Activated CD8-positive, alpha-beta T cell treated with anti-CD3 and anti-CD28 coated beads, Interleukin-2, amount 10 ng/mL, durations not matched to agents 7 days and 5 days (primary cell): ENCODE measurements at regions of chr17 and their contacts with region 1.

Region 1: DNA sequence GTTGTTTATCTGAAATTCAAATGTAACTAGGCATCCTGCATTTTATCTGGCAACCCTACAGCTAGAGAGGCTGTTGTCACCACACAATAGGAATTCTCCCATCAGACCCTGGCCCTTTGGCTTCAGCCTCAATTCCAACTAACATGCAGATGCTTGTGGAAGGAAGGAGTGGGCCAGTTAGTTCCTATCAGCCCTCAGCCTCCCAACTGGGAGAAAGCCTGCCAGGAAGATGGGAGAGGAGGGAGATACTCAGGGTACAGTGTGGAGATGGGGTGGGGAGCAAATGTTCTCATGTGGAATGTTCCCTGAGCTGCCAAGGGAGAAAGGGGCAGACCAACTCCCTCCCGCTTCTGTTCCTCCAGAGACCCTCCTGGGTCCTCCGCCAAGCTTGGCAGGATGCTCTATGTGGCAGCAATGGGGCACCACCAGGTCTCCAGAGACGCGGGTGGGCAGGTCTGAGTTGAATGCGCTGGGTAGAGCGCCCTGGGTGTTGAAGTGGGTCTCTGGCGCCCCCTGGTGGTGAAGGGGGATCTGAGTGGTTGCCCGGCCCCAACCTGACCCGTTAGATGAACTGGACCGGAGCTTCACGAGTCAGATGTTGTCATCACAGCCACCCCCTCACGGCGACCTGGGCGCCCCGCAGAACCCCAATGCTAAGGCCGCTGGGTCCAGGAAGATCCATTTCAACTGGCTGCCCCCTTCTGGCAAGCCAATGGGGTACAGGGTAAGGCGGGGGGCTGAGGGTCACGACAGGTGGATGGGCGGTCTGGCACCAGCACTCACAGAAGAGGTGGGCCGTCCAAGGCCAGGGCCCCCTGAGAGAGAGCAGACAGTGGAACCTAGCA is 15.2 kb downstream of the GALK1 start:
- DNase-seq: peak; percentile 93
- ATAC-seq: peak; percentile 73
- H3K4me3 Mint-ChIP-seq: no peak overlapping the region
- H3K27ac Mint-ChIP-seq: no peak overlapping the region
- H3K4me1 Mint-ChIP-seq: peaks cover 18% of the 10 kb centered on the region
- H3K27me3 Mint-ChIP-seq: peaks cover 2% of the 10 kb centered on the region

Region 2: GRCh38 chr17:75557075-75557882 is 192.5 kb before region 1 on chr17:
- CTCF ChIA-PET with region 1: no interaction called
- POLR2A ChIA-PET with region 1: no interaction called
- DNase-seq: no peak
- ATAC-seq: no peak
- H3K4me3 Mint-ChIP-seq: no peak overlapping the region
- H3K27ac Mint-ChIP-seq: no peak overlapping the region
- H3K4me1 Mint-ChIP-seq: no peaks in the 10 kb centered on the region
- H3K27me3 Mint-ChIP-seq: no peaks in the 10 kb centered on the region

Region 3: GRCh38 chr17:75601057-75602051 is 148.4 kb before region 1 on chr17:
- CTCF ChIA-PET with region 1: interaction called, 56 read pairs
- POLR2A ChIA-PET with region 1: interaction called, 3 read pairs
- DNase-seq: peak; percentile 78
- ATAC-seq: peak; percentile 86
- H3K4me3 Mint-ChIP-seq: no peak overlapping the region
- H3K27ac Mint-ChIP-seq: no peak overlapping the region
- H3K4me1 Mint-ChIP-seq: peaks cover 5% of the 10 kb centered on the region
- H3K27me3 Mint-ChIP-seq: no peaks in the 10 kb centered on the region

Region 4: DNA sequence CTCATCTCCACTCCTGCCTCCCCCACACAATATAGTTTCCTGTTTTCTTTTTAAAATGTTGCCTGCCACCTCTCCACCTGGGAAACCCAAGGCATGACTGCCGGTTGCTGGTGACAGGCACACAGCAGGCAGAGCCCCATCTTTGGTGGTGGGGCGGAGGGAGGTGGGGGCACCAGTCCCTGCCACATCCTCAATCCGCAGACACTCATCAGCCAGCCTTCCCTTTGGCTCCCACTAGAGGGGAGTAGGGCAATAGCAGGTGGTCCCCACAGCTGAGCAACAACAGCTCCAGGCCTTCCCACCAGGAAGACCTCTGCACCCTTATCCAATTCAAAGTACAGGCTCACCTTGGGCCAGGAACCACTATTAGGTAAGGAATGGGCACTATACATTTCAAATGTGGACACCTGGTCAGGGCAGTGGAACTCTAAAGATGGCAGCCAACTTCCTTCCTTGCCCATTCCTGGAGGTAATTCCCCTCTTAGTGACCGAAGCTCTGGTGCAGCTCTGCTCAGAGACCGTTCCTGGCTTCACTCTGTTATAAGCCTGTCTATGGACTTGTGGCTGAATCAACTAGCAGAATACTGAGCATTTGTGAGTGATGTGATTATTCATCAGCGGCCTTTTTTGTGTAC is 96.7 kb before region 1 on chr17:
- CTCF ChIA-PET with region 1: interaction called, 48 read pairs
- POLR2A ChIA-PET with region 1: no interaction called
- DNase-seq: peak; percentile 60
- ATAC-seq: peak; percentile 79
- H3K4me3 Mint-ChIP-seq: no peak overlapping the region
- H3K27ac Mint-ChIP-seq: peak overlapping the region; percentile 72
- H3K4me1 Mint-ChIP-seq: peaks cover 15% of the 10 kb centered on the region
- H3K27me3 Mint-ChIP-seq: no peaks in the 10 kb centered on the region

Region 5: DNA sequence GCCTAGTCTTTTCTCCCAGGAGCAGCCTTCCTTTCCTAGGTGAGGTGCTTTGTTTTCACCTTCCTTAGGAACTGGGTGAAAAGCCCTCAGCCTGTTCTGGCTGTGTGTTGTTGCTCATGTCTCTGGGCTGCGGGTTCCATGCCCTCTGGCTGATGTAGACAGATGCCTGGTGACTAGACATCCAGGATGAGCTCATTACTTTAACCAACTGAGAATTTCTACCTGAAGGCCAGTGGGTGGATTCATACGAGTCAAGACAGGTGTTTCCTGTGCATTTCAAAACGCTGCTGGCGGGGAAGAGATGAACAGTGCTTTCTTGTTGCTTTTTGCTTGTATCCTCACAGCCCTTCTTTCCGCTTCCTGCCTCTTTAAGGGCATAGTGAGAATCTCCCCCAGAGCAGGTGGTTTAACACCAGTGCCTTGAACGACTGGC is 60.3 kb before region 1 on chr17:
- CTCF ChIA-PET with region 1: interaction called, 120 read pairs
- POLR2A ChIA-PET with region 1: no interaction called
- DNase-seq: peak; percentile 76
- ATAC-seq: peak; percentile 69
- H3K4me3 Mint-ChIP-seq: peak overlapping the region; percentile 37
- H3K27ac Mint-ChIP-seq: peak overlapping the region; percentile 83
- H3K4me1 Mint-ChIP-seq: peaks cover 60% of the 10 kb centered on the region
- H3K27me3 Mint-ChIP-seq: no peaks in the 10 kb centered on the region

Region 6: GRCh38 chr17:75738218-75738802 is 11.5 kb before region 1 on chr17:
- CTCF ChIA-PET with region 1: interaction called, 51 read pairs
- POLR2A ChIA-PET with region 1: interaction called, 3 read pairs
- DNase-seq: peak; percentile 72
- ATAC-seq: peak; percentile 65
- H3K4me3 Mint-ChIP-seq: peak overlapping the region; percentile 28
- H3K27ac Mint-ChIP-seq: peak overlapping the region; percentile 89
- H3K4me1 Mint-ChIP-seq: peaks cover 13% of the 10 kb centered on the region
- H3K27me3 Mint-ChIP-seq: no peaks in the 10 kb centered on the region

Region 7: GRCh38 chr17:75795820-75796607 is 46.2 kb after region 1 on chr17:
- CTCF ChIA-PET with region 1: interaction called, 14 read pairs
- POLR2A ChIA-PET with region 1: no interaction called
- DNase-seq: no peak
- ATAC-seq: no peak
- H3K4me3 Mint-ChIP-seq: no peak overlapping the region
- H3K27ac Mint-ChIP-seq: no peak overlapping the region
- H3K4me1 Mint-ChIP-seq: peaks cover 31% of the 10 kb centered on the region
- H3K27me3 Mint-ChIP-seq: no peaks in the 10 kb centered on the region

Region 8: GRCh38 chr17:75864448-75864871 is 114.7 kb after region 1 on chr17:
- CTCF ChIA-PET with region 1: interaction called, 13 read pairs
- POLR2A ChIA-PET with region 1: no interaction called
- DNase-seq: peak; percentile 74
- ATAC-seq: peak; percentile 88
- H3K4me3 Mint-ChIP-seq: peak overlapping the region; percentile 39
- H3K27ac Mint-ChIP-seq: peak overlapping the region; percentile 83
- H3K4me1 Mint-ChIP-seq: peaks cover 29% of the 10 kb centered on the region
- H3K27me3 Mint-ChIP-seq: no peaks in the 10 kb centered on the region